ENCODE measurements at regions of chr19 and their contacts with region 1.

Region 1: DNA sequence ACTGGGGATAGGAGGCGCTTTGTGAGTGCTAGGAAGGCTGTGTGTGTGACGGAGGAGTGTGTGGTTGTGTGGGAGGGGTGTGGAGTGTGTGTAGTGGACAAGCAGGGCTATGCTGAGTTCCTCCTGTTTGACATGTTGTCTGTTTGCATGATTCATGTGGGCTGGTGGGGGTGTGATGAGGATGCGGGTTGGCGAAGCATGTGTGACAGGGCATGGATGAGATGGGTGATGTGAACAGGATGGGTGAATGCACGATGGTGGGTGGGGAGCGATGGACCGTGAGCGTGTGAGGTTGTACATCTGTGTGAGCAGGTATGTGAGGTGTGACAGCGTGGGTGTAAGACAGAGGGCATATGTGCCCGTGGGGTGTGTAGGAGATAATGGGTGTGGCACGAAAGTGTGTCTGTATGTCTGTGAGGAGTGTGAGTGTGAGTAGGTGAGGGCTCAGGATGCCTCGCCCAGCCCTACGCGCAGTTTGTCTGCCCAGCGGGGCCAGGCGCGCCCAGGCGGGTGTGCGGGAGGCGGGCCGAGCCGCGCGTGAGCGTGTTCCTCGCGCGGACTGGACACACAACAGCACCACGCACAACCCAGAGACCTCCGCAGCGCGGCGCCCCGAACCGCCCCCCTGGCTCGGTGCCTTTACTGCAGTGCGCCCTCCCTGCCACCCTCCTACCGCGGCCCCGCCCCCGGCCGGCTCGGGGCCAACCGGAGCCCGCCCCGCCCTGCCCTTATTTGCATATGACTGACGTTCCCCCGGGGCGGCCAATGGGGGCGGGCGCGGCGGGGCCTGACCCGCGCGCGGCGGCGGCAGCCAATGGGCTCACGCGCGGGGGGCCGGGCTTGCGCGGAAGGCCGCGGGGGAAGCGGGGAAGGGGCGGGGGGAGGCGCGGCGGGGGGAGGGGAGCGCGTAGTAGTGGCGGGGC is 14.4 kb downstream of the CIC start:
- DNase-seq: peak; percentile 97
- ATAC-seq: peak; percentile 69
- H3K4me3 Mint-ChIP-seq: no peak overlapping the region
- H3K27ac Mint-ChIP-seq: no peak overlapping the region
- H3K4me1 Mint-ChIP-seq: peaks cover 32% of the 10 kb centered on the region
- H3K27me3 Mint-ChIP-seq: no peaks in the 10 kb centered on the region
- CTCF ChIP-seq: no peak

Region 2: DNA sequence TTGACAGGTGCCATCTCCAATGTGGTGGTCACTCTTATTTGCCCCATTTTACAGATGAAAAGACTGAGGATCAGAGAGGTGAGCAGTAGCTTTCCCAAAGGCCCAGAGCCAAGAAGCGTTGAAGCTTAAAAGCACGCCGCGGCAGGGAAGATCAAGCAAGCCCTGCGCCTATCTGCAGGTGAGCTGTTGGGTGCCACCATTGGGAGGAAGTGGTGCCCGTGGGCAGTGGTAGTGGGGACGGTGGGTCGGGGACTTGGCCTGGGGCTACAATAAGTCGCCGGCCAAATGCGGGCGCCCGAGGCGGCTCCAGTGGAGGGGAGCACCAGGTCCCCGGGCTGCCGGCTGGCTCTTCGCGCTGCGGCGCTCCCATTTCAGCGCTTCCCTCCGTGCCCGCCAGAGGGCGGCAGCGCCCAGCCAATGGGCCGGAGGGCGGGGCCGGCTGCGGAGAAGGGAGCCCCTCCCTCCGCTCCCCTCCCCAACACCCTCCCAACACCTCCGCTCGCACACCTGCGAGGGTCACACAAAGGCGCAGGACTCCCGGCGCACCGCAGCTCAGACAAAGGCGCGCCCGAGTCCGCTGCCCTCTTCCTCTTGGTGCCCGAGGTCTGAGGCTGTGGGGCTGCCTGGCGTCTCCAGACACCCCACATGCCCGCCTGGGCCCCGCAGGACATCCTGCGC is 150.4 kb before region 1 on chr19:
- CTCF ChIA-PET with region 1: interaction called, 20 read pairs
- POLR2A ChIA-PET with region 1: no interaction called
- intact Hi-C with region 1: loop called (anchors 10 kb)
- DNase-seq: peak; percentile 81
- ATAC-seq: peak; percentile 74
- H3K4me3 Mint-ChIP-seq: peak overlapping the region; percentile 78
- H3K27ac Mint-ChIP-seq: peak overlapping the region; percentile 79
- H3K4me1 Mint-ChIP-seq: peaks cover 40% of the 10 kb centered on the region
- H3K27me3 Mint-ChIP-seq: no peaks in the 10 kb centered on the region
- CTCF ChIP-seq: peak; percentile 99

Region 3: DNA sequence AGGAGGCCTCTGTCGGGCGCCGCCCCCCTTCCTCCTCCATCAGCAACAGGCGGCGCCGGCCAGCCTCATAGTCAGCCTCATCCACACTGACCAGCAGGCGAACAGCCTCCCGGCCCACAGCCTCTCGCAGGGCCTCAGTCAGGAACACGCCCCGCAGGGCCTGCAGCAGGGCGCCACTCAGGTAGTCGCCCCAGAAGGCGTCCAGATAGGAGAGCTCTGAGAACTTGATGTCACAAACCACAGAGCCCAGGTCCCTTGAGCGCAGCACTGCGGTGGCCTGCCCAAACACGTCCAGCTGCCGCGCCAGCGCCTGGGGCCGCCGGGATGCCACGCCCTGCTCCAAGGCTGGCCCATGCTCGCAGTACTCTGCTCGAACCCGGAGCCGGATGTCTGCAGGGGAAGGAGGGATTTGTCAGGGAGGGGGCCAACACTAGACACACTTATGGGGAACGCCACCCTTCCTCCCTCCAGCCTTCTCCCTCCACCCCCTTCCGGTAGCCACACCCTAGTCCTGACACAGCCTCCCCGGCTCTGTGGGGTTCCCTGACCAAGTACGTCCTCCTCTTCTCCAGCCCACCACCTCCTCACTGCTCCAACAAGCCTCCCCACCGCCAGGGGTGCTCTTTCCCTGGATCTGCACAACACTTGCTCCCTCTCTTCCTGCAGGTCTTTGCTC is 83.8 kb before region 1 on chr19:
- CTCF ChIA-PET with region 1: interaction called, 11 read pairs
- POLR2A ChIA-PET with region 1: interaction called, 3 read pairs
- intact Hi-C with region 1: no loop called
- DNase-seq: peak; percentile 84
- ATAC-seq: peak; percentile 66
- H3K4me3 Mint-ChIP-seq: peak overlapping the region; percentile 72
- H3K27ac Mint-ChIP-seq: peak overlapping the region; percentile 95
- H3K4me1 Mint-ChIP-seq: peaks cover 80% of the 10 kb centered on the region
- H3K27me3 Mint-ChIP-seq: no peaks in the 10 kb centered on the region
- CTCF ChIP-seq: peak; percentile 50

Region 4: DNA sequence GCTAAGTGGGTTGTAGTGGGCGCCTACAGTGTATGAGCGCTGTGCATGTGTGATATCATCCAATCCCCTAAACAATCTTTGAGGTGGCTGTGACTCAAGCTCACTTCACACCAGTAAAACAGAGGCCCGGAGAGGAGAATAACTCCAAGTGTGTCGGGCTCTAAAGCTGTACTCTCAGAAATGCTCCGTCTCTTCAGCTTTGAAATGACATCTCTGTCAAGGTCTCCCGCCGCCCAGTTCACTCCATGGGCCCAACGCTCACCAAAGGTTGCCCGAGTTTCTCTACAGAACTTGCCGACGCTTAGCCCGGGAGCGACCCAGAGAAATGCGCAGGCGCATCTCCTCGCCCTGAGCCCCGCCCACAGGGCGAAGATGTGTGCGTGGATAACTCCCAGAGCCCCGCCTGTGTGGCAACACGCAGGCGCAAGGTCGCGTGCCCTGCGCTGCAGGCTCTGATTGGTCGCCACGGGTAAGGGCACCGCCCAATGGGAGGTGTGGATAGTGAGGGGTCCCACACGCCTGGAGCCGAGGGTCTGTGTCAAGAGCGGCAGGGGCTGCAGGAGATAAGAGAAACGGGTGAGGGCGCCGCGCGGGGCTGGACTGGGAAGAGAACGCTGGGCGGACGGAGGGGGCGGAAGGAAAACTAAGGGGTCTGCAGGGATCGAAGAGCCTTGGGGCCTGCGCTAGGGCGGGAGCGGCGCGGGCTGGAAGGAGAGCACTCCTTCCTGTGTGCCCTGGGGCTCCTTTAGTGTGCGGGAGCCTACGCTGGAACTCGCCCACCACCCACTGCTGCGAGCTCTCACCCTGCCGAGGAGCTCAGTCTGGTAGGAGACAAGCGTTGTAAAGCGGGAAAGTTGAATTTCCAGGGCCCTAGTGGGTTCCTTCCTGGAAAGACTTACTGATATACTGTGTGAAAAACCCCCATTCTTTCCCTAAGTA is 63.3 kb before region 1 on chr19 and contains the start of gene ZNF526:
- CTCF ChIA-PET with region 1: interaction called, 17 read pairs
- POLR2A ChIA-PET with region 1: interaction called, 4 read pairs
- intact Hi-C with region 1: no loop called
- DNase-seq: peak; percentile 98
- ATAC-seq: peak; percentile 84
- H3K4me3 Mint-ChIP-seq: peak within 1 kb of the TSS; percentile 99
- H3K27ac Mint-ChIP-seq: peak within 1 kb of the TSS; percentile 100
- H3K4me1 Mint-ChIP-seq: peaks cover 46% of the 10 kb centered on the region
- H3K27me3 Mint-ChIP-seq: no peaks in the 10 kb centered on the region
- CTCF ChIP-seq: no peak
- total RNA-seq, gene ZNF526: 12.0 to 12.3 TPM

Region 5: DNA sequence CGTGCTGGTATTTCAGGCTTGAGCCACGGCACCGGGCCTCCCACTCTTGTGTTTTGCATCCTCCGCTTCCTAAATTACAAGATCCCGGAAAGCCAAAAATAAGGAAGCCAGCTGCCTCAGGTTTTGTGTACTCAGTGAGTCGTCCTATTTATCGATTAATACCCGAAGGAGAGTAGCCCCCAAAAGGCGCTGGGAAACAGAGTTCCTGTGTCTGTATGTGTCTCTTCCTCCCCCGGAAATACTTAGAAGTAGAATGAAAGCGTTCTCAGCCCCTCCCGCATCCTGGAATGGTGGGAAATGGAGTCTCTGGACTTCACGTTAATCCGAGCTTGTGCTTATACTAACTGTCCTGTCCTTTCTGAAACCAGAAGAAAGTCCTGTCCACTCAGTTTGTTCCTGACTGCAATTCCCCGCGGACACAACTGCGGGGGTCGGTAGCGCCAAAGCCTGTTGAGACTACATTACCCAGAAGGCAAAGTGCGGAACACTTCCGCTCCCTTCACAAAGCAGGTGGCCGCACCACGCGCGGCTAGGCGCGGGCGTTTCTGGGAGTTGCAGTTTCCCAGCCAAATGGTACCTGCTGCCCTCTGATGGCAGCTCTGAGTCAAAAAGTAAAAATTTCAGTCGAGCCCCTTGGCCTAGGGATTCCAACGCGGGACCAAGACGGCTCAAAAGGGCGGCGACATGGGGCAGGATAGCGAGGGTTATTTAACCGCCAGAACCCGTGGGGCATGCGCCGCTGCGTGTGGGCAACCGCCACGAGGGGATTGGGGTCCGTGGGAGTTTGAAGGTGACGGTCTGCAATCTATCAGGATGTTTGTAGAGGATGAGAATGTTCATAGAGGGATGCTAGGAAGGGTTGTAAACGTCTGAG is 38.8 kb before region 1 on chr19:
- CTCF ChIA-PET with region 1: interaction called, 107 read pairs
- POLR2A ChIA-PET with region 1: interaction called, 119 read pairs
- intact Hi-C with region 1: loop called (anchors 5 kb)
- DNase-seq: peak; percentile 97
- ATAC-seq: peak; percentile 45
- H3K4me3 Mint-ChIP-seq: peak overlapping the region; percentile 94
- H3K27ac Mint-ChIP-seq: peak overlapping the region; percentile 100
- H3K4me1 Mint-ChIP-seq: peaks cover 46% of the 10 kb centered on the region
- H3K27me3 Mint-ChIP-seq: no peaks in the 10 kb centered on the region
- CTCF ChIP-seq: peak; percentile 60

Region 6: GRCh38 chr19:42254989-42255765 is 28.2 kb before region 1 on chr19 and contains the start of gene ERF:
- CTCF ChIA-PET with region 1: interaction called, 29 read pairs
- POLR2A ChIA-PET with region 1: interaction called, 119 read pairs
- intact Hi-C with region 1: no loop called
- DNase-seq: peak; percentile 95
- ATAC-seq: peak; percentile 76
- H3K4me3 Mint-ChIP-seq: peak within 1 kb of the TSS; percentile 95
- H3K27ac Mint-ChIP-seq: peak within 1 kb of the TSS; percentile 81
- H3K4me1 Mint-ChIP-seq: peaks cover 27% of the 10 kb centered on the region
- H3K27me3 Mint-ChIP-seq: peaks cover 5% of the 10 kb centered on the region
- CTCF ChIP-seq: no peak
- total RNA-seq, gene ERF: 60.0 to 69.2 TPM

Region 7: GRCh38 chr19:42268704-42269477 is 14.5 kb before region 1 on chr19 and contains the start of gene CIC:
- CTCF ChIA-PET with region 1: interaction called, 36 read pairs
- POLR2A ChIA-PET with region 1: interaction called, 31 read pairs
- intact Hi-C with region 1: no loop called
- DNase-seq: peak; percentile 99
- ATAC-seq: peak; percentile 80
- H3K4me3 Mint-ChIP-seq: no peak within 1 kb of the TSS
- H3K27ac Mint-ChIP-seq: peak within 1 kb of the TSS; percentile 99
- H3K4me1 Mint-ChIP-seq: peaks cover 26% of the 10 kb centered on the region
- H3K27me3 Mint-ChIP-seq: no peaks in the 10 kb centered on the region
- CTCF ChIP-seq: no peak
- total RNA-seq, gene CIC: 60.7 to 65.6 TPM